ENCODE measurements at regions of chr10 and their contacts with region 1.

Region 1: GRCh38 chr10:80046629-80047441 is 31.6 kb upstream of the TMEM254 start:
- DNase-seq: peak; percentile 46
- H3K4me3 Mint-ChIP-seq: no peak overlapping the region
- H3K27ac Mint-ChIP-seq: no peak overlapping the region
- H3K4me1 Mint-ChIP-seq: no peaks in the 10 kb centered on the region
- H3K27me3 Mint-ChIP-seq: peaks cover 1% of the 10 kb centered on the region

Region 2: GRCh38 chr10:79938728-79939406 is 108.0 kb before region 1 on chr10:
- intact Hi-C with region 1: loop called (anchors 10 kb)
- DNase-seq: no peak
- H3K4me3 Mint-ChIP-seq: no peak overlapping the region
- H3K27ac Mint-ChIP-seq: no peak overlapping the region
- H3K4me1 Mint-ChIP-seq: peaks cover 10% of the 10 kb centered on the region
- H3K27me3 Mint-ChIP-seq: peaks cover 7% of the 10 kb centered on the region